ENCODE measurements at regions of chr1 and their contacts with region 1.

Region 1: DNA sequence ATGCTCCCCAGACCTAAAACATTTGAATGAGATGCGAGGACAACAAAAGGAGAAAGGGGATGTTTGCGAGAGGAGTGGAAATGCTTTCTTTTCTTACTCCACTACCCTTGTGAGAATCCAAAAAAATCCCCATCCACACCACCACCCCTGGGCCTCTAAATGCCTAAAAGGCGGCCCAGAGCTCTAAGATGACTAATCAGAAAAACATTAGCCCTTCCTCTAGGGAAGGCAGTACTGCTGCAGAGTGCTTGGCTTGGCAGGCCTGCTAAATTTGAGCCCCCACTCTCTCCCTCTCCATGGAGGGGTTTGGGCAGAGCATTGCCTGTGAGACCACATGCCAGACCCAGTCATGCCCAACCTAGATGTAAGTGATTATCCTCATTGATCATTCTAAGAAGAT is 347.9 kb downstream of the USH2A start:
- DNase-seq: no peak
- ATAC-seq: no peak
- H3K4me3 ChIP-seq: no peak overlapping the region
- H3K27ac ChIP-seq: no peak overlapping the region
- H3K4me1 ChIP-seq: no peaks in the 10 kb centered on the region
- H3K27me3 ChIP-seq: no peaks in the 10 kb centered on the region
- CTCF ChIP-seq: no peak

Region 2: DNA sequence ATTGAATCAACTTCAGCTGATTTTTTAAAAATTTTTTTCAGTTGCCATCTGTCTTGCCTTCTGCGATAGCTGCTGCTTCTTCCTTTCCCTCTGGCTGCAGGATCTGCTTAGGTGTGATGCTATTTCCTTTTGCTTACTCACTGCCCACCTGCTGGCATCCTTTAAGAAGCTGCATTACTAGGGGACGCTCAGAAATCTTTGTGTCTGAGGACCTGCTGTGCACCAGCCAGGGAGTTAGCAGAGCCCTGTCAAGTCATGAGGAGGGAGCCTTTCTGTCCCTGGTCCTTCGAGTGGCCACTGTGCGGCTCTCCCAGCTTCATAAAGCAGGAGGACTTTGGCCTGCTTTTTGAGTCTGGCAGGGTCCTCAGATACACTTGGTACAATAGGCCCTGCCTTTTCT is 20.1 kb after region 1 on chr1:
- CTCF ChIA-PET with region 1: no interaction called
- POLR2A ChIA-PET with region 1: no interaction called
- in situ Hi-C with region 1: no loop called
- intact Hi-C with region 1: loop called (anchors 2 kb)
- DNase-seq: no peak
- ATAC-seq: no peak
- H3K4me3 ChIP-seq: no peak overlapping the region
- H3K27ac ChIP-seq: no peak overlapping the region
- H3K4me1 ChIP-seq: no peaks in the 10 kb centered on the region
- H3K27me3 ChIP-seq: no peaks in the 10 kb centered on the region
- CTCF ChIP-seq: no peak